ENCODE measurements at regions of chr4 and their contacts with region 1.

Region 1: DNA sequence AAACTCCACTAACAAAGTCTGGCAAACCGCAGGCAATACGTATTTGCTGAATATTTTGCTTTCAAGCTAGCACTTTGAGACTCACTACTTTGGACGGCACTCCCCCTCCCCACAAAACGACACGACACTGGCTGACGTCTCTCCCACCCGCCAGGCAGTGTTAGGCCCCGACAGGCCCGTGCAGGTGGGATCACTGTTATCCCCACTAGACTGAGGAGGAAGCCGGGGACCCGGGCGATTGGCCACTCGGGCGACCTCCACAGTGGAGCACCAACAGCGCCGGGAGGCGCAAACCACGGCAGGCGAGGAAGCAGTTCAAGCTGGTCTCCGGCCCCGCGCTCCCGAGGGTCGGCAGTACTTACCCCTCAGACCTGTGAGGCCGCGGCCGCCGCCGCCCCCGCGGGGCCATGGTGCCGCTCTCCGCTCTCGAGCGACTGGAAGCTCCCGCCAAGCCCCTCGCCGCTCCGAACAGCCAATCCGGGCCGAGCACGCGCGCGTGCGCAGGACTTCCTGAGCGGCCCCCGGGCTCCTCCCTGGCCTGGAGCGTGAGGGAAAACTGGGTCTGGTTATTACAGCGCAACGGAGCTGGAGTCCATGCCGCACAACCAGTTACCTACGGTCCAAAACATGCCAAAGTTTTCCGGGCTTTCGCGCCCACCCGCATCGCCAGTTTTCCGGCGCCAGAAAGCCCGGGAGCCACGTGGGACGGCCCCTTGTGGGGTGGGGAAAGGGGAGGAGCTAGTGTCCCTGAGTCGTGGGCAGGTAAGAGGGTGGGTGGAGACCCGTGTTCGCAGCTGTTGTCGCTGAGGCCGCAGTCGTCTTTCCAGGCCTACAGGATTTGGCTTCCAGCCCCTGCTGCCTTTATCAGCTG is at the start of gene CENPU:
- DNase-seq: peak; percentile 100
- CTCF ChIP-seq: no peak

Region 2: GRCh38 chr4:184649026-184649970 is 84.6 kb before region 1 on chr4 and contains the starts of genes CASP3 and PRIMPOL:
- CTCF ChIA-PET with region 1: interaction called, 3 read pairs
- POLR2A ChIA-PET with region 1: interaction called, 15 read pairs
- DNase-seq: peak; percentile 93
- CTCF ChIP-seq: peak; percentile 52

Region 3: DNA sequence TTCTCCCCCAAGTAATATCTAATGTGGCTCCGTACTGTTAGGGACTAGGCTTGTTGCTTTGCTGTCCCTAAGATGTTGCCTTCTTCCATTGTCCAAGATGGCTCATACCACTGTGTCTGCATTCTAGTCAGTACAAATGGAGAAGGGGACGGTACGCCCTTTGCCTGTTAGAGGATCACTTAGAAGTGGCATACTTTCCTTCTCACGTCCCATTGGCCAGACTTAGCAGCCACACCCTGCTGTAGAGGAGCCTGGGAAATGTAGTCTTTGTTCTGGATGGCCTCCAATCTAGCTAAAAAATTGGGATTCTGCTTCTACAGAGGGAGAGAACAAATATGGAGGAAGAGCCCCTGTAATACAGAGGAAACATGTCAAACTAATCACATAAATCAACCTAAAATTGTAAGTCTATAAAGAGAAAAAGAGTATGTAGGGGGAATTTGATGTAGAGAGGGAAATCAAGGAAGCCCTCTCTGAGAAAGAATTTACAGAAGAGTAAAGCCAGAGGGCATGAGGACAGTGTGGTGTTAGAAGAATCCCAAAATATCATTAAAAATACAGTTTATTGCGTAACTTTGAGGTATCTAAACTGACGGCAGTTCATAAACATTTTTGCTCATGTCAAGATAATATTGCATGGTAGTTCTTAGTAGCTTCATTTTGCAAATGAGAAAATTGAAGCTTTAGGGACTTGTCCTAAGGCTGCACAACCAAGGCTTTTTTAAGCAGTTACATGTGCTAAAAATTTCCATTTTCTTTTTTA is 69.3 kb before region 1 on chr4:
- CTCF ChIA-PET with region 1: no interaction called
- POLR2A ChIA-PET with region 1: no interaction called
- DNase-seq: no peak
- CTCF ChIP-seq: no peak

Region 4: GRCh38 chr4:184792950-184793555 is 59.2 kb after region 1 on chr4:
- CTCF ChIA-PET with region 1: no interaction called
- POLR2A ChIA-PET with region 1: no interaction called
- DNase-seq: no peak
- CTCF ChIP-seq: no peak